Kidney (tissue), 22 donors: ENCODE measurements at regions of chr1 and their contacts with region 1.

Region 1: DNA sequence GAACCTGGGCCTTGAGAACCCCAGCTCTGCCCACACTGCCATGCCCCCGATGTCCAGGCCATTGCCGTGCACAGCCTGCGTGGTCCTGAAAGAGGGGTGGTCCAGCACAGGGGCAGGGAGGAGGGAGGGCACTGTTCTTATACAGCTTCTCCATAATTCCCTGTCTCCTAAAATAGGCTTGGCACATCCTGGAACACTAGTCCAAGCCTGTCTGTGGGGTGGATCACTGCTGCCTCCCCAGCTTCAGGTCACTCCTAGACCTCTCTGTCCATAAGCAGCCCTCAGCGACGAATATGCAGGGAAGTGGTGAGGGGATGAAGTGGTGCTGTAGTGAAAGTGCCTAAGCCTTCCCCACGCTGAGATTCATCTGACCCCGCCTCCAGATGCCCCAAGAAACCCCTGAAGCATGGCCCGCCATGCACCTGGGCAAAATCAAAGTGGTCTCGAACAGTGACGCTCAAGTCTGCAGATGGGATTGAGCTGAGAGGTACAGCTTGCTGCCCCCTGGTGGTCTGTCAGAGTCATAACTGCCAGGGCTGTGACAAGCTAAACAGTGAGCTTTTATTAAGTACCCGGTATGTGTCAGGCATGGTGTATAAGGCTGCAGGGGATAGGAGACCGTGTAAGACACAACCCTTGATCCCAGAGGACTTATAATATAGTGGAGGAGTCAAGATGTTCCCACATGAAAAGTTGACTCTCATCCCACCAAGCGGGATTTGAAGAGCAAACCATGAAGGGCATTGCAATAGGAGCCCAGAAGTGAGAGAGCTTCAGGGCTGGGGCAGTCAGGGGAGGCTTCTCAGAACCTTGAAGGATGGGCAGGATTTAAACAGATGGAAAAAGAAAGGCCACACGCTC is 66.6 kb downstream of the FAM163A start:
- DNase-seq: peak in 4 of 5 donors; percentile 80 to 88 (median 86)
- H3K4me3 ChIP-seq: no peak overlapping the region
- H3K27ac ChIP-seq: no peak overlapping the region
- H3K4me1 ChIP-seq: peaks cover 0 to 5% (median 0%) of the 10 kb centered on the region in 3 donors
- H3K27me3 ChIP-seq: no peaks in the 10 kb centered on the region
- CTCF ChIP-seq: peak; percentile 94

Region 2: DNA sequence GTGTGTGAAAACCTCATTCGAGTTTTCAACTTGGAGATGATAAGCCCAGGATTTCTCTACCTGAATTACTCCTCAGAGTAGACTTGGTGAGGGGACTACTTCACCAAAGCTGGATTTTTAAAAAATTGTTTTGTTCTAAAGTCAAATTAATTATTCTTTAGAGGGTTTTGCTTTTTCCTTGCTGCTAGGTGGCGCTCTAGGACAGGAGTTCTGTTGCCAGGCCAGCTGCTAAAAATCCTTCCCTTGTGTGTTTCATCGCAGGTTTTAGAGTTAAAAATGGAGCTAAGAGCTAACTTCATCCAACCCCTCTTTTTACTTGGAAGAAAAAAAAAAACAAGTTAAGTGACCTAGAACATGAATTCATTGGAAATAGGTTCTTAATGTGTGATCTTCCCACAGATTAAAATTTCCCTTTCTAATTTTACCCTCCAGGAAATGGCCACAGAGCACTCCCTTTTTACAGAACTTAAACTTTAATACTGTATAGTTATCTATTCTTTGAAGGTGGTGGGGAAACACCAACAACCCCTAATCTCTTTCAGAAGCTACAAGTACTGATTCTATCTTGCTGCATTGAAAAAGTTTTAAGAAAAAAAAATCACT is 103.3 kb before region 1 on chr1:
- intact Hi-C with region 1: loop called (anchors 5 kb)
- DNase-seq: peak in 4 of 5 donors; percentile 53 to 90 (median 77)
- H3K4me3 ChIP-seq: no peak overlapping the region
- H3K27ac ChIP-seq: no peak overlapping the region
- H3K4me1 ChIP-seq: peaks cover 0 to 3% (median 0%) of the 10 kb centered on the region in 3 donors
- H3K27me3 ChIP-seq: no peaks in the 10 kb centered on the region
- CTCF ChIP-seq: peak; percentile 70

Region 3: DNA sequence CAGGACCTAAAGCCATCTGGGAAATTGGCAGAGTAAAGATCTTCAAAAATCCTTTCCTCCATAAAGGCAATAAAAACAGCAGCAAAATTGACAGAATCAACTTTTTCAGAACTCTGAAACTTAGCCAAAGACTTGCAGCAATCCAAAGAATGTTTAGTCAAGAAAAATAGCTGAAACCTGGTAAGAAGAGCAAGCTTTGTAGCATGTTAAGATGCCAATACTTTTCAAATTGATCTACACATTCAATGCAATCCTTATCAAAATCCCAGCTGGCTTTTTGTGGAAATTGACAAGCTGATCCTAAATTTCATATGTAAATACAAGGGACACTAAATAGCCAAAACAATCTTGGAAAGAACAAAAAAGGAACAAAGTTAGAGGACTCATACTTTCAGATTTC is 90.5 kb before region 1 on chr1:
- intact Hi-C with region 1: no loop called
- DNase-seq: no peak
- H3K4me3 ChIP-seq: no peak overlapping the region
- H3K27ac ChIP-seq: no peak overlapping the region
- H3K4me1 ChIP-seq: no peaks in the 10 kb centered on the region
- H3K27me3 ChIP-seq: no peaks in the 10 kb centered on the region
- CTCF ChIP-seq: no peak

Region 4: GRCh38 chr1:179882243-179883039 is 72.7 kb after region 1 on chr1 and contains the start of gene TOR1AIP1:
- intact Hi-C with region 1: no loop called
- DNase-seq: peak; percentile 99 to 100 (median 99)
- H3K4me3 ChIP-seq: peak within 1 kb of the TSS; percentile 74 to 91 (median 87)
- H3K27ac ChIP-seq: peak within 1 kb of the TSS; percentile 100
- H3K4me1 ChIP-seq: peaks cover 0 to 15% (median 0%) of the 10 kb centered on the region in 3 donors
- H3K27me3 ChIP-seq: no peaks in the 10 kb centered on the region
- CTCF ChIP-seq: peak; percentile 15
- total RNA-seq, gene TOR1AIP1: 44.2 TPM